ENCODE measurements at regions of chr9 and their contacts with region 1.

Region 1: GRCh38 chr9:115591584-115591984 is 473.6 kb upstream of the TNC start:
- DNase-seq: peak in 1 of 2 donors; percentile 52
- ATAC-seq: peak; percentile 79 to 98 (median 86)
- H3K4me3 ChIP-seq: no peak overlapping the region
- H3K27ac ChIP-seq: peak overlapping the region in 2 of 10 donors; percentile 32 to 63
- H3K4me1 ChIP-seq: peaks cover 0 to 5% (median 0%) of the 10 kb centered on the region in 9 donors
- H3K27me3 ChIP-seq: peaks cover 0 to 26% (median 15%) of the 10 kb centered on the region in 7 donors
- CTCF ChIP-seq: peak; percentile 25 to 79 (median 74)

Region 2: DNA sequence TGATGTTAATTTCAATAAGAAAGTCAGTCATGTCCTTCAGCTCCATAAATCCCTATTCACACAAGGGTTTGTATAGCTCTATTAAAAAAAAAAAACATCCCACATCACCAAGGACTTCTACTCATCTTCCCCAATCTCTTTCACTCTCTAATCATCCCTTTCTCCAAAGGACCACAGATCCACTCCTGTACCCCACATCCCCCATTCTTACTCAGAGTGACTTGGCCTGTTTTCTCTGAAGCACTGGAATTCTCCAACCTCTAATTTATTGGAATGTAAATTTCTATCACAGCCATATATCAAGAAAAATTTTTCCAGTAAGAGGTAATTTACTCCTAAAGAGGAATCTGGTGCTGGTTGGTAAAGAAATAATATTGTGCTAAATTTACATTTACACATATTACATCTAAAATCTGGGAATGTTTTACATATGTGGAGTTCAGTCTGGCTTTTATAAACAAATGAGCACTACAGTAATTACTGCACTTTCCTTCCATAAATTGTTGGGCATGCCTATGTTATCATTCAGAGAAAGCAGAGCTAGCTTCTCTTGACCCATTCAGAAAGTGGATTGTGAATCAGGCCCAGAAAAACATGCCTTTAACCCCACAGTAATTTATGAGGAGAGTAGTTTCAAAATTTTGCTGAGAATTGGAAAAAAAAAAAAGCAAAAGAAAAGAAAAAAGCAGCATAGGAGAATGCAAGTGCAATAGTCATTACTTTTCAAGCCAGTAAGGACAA is 74.1 kb before region 1 on chr9:
- intact Hi-C with region 1: no loop called
- DNase-seq: no peak
- ATAC-seq: no peak
- H3K4me3 ChIP-seq: no peak overlapping the region
- H3K27ac ChIP-seq: no peak overlapping the region
- H3K4me1 ChIP-seq: no peaks in the 10 kb centered on the region
- H3K27me3 ChIP-seq: no peaks in the 10 kb centered on the region
- CTCF ChIP-seq: no peak

Region 3: DNA sequence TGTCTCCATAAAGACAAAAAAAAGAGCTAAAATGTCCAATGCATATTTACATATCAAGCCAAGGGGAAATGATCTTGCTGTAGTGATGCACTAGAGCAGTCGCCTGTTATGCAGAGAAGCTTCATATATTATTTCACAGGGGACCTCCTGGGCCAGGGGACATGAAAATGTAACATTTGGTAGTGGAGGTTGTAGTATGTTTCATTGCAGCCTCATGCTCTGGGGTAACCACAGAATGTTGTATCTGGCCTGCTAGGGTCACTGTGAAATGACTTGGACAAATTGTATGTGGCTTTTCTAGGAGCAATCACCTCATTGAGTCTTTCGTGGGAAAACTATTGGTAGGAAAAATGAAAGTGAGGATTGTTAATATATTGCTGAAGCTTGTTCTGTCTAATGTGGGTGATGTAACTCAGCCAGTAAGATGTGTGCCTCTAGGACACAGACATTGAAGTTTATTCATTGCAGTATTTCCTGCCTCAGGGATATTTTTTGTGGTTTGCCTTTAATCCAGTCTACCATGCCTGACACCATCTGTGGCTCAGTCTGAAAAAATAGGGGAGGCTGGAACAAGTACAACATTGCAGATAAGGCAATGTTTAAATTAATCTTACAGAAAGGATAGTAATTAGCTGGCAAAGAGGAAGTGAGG is 42.8 kb before region 1 on chr9:
- intact Hi-C with region 1: no loop called
- DNase-seq: no peak
- ATAC-seq: no peak
- H3K4me3 ChIP-seq: no peak overlapping the region
- H3K27ac ChIP-seq: no peak overlapping the region
- H3K4me1 ChIP-seq: no peaks in the 10 kb centered on the region
- H3K27me3 ChIP-seq: peaks cover 0 to 4% (median 0%) of the 10 kb centered on the region in 7 donors
- CTCF ChIP-seq: no peak

Region 4: GRCh38 chr9:116112236-116112635 is 520.7 kb after region 1 on chr9:
- intact Hi-C with region 1: loop called in 1 of 10 experiments (anchors 10 kb)
- DNase-seq: no peak
- ATAC-seq: no peak
- H3K4me3 ChIP-seq: no peak overlapping the region
- H3K27ac ChIP-seq: no peak overlapping the region
- H3K4me1 ChIP-seq: no peaks in the 10 kb centered on the region
- H3K27me3 ChIP-seq: no peaks in the 10 kb centered on the region
- CTCF ChIP-seq: peak in 7 of 9 donors; percentile 5 to 46 (median 30)

Region 5: DNA sequence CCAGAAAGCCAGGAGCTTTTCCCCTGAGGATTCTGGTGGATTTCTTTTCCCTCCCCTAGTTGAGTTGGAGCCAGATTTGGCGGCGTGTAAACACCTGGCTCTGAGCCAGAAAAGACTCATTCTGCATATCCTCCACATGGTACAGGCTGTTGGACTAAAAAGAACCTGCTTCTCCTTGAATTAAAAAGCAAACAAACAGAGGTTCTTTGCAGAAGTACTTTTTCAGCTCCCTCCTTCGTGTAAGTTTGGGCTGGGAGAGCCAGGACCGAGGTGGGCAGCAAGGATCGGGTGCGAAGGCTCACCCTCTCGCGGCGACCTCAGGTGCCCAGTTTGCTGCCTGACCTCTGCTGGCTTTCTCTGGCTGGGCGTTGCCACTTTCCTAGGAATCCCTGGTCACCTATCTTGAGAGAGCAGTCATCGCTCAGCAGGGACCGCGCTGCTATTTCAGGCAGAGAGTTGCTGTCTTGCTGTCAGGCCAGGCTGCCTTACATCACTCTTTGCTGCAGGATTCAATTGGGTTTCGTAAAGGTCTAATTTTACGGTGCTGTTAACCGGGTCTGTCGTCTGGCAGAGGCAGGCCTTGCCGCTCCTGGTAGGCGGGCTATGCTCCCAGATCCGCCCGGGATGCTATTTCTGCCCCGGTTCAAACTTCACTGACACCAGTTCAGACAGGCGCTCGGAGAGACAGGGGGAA is 565.2 kb after region 1 on chr9:
- intact Hi-C with region 1: loop called in 4 of 10 experiments (anchors 5 to 10 kb)
- DNase-seq: peak; percentile 63 to 79
- ATAC-seq: peak; percentile 84 to 98 (median 94)
- H3K4me3 ChIP-seq: peak overlapping the region in 9 of 10 donors; percentile 3 to 65 (median 43)
- H3K27ac ChIP-seq: peak overlapping the region; percentile 74 to 95 (median 87)
- H3K4me1 ChIP-seq: peaks cover 6 to 41% (median 20%) of the 10 kb centered on the region in 9 donors
- H3K27me3 ChIP-seq: peaks cover 0 to 60% (median 5%) of the 10 kb centered on the region in 7 donors
- CTCF ChIP-seq: no peak

Region 6: DNA sequence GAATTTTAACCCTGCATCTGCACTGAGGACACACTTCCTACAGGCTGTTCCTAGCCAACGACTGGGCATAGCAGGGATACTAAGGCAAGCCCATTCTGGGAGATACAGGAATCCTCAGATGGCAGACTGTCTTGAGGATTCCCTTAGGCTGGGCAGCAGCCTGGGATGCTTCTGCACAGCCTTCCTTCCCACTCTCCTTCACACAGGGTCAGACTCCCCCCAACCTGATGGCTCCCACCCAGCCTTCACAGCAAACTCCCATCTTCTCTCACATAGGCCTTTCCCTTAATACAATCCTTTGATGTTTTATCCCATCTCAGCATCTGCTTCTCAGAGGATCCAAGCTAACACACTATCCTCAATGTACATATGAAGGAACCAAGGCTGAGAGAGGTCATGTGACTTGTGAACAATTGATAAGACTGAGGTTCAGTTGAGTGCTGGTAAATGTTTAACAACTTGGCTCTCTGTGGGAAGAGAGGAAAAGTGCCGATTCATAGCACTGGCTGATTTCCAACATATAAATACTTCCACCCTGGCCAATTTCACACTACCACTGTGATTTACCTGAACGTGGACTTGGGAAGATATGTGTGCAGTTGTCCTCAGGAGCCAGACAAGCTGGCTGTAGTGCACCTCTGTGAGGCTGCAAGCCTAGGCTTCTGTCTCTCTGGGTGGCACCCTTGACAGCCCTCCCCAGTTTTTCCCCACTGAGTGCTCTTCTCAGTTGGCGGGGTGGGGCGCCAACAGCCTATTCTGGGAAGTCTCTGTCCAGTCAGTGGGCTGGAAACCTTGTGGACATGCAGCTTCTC is 975.3 kb after region 1 on chr9:
- intact Hi-C with region 1: loop called in 8 of 10 experiments (anchors 2 to 10 kb)
- DNase-seq: no peak
- ATAC-seq: no peak
- H3K4me3 ChIP-seq: no peak overlapping the region
- H3K27ac ChIP-seq: peak overlapping the region in 1 of 10 donors; percentile 7
- H3K4me1 ChIP-seq: peaks cover 0 to 15% (median 7%) of the 10 kb centered on the region in 9 donors
- H3K27me3 ChIP-seq: no peaks in the 10 kb centered on the region
- CTCF ChIP-seq: no peak

Region 7: GRCh38 chr9:116646661-116647512 is 1055.3 kb after region 1 on chr9:
- intact Hi-C with region 1: loop called in 3 of 10 experiments (anchors 5 to 10 kb)
- DNase-seq: no peak
- ATAC-seq: peak; percentile 65 to 86 (median 76)
- H3K4me3 ChIP-seq: no peak overlapping the region
- H3K27ac ChIP-seq: peak overlapping the region in 3 of 10 donors; percentile 4 to 53 (median 29)
- H3K4me1 ChIP-seq: peaks cover 0 to 35% (median 14%) of the 10 kb centered on the region in 9 donors
- H3K27me3 ChIP-seq: no peaks in the 10 kb centered on the region
- CTCF ChIP-seq: peak in 8 of 9 donors; percentile 29 to 71 (median 62)

Region 8: GRCh38 chr9:116860509-116861120 is 1269.0 kb after region 1 on chr9:
- intact Hi-C with region 1: loop called in 5 of 10 experiments (anchors 5 to 10 kb)
- DNase-seq: peak; percentile 33 to 52
- ATAC-seq: peak in 6 of 8 donors; percentile 51 to 84 (median 66)
- H3K4me3 ChIP-seq: no peak overlapping the region
- H3K27ac ChIP-seq: no peak overlapping the region
- H3K4me1 ChIP-seq: no peaks in the 10 kb centered on the region
- H3K27me3 ChIP-seq: peaks cover 0 to 12% (median 0%) of the 10 kb centered on the region in 7 donors
- CTCF ChIP-seq: peak; percentile 35 to 74 (median 71)

Measured in heart right ventricle (tissue), 16 donors.